SK-N-SH (cell line): ENCODE measurements at regions of chr1 and their contacts with region 1.

Region 1: GRCh38 chr1:164786980-164787833 is 228.2 kb downstream of the PBX1 start:
- DNase-seq: peak; percentile 89
- H3K4me3 ChIP-seq: no peak overlapping the region; a peak in 1 of 4 replicates
- H3K27ac ChIP-seq: no peak overlapping the region
- H3K4me1 ChIP-seq: peaks cover 14 to 19% of the 10 kb centered on the region in 2 experiments; a peak in 3 of 4 replicates
- H3K27me3 ChIP-seq: no peaks in the 10 kb centered on the region
- CTCF ChIP-seq: peak; percentile 96
- EP300 ChIP-seq: no peak
- RAD21 ChIP-seq: peak; percentile 98

Region 2: DNA sequence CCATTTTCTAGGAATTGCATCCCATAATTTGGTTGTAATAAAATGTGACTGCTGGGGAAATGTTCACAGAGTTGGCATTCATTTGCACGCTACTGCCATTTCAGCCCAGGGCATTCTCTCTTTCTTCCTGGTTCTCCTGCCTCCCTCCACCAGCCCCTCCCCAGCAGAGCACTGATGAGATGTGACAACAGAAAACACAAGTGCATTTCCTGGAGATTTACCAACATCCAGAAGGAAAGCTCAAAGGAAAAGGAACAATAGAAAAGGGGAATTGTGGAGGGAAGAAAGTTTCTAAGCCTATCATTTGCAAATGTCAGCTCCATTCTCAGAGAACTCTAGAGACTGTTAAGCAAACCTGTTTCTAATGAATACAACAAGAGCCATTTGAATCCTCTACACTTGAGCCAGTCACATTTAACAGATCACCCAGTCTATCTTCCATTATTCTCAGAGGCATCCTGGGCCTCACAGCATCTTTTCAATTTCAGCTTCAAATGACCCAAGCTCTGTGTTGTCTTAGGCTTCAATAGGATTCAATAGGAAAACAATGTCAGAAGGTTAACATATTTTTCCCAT is 623.8 kb before region 1 on chr1:
- CTCF ChIA-PET with region 1: interaction called, 40 read pairs
- POLR2A ChIA-PET with region 1: no interaction called
- DNase-seq: no peak
- H3K4me3 ChIP-seq: no peak overlapping the region
- H3K27ac ChIP-seq: no peak overlapping the region
- H3K4me1 ChIP-seq: no peaks in the 10 kb centered on the region
- H3K27me3 ChIP-seq: no peaks in the 10 kb centered on the region
- CTCF ChIP-seq: no peak
- EP300 ChIP-seq: no peak
- RAD21 ChIP-seq: no peak

Region 3: DNA sequence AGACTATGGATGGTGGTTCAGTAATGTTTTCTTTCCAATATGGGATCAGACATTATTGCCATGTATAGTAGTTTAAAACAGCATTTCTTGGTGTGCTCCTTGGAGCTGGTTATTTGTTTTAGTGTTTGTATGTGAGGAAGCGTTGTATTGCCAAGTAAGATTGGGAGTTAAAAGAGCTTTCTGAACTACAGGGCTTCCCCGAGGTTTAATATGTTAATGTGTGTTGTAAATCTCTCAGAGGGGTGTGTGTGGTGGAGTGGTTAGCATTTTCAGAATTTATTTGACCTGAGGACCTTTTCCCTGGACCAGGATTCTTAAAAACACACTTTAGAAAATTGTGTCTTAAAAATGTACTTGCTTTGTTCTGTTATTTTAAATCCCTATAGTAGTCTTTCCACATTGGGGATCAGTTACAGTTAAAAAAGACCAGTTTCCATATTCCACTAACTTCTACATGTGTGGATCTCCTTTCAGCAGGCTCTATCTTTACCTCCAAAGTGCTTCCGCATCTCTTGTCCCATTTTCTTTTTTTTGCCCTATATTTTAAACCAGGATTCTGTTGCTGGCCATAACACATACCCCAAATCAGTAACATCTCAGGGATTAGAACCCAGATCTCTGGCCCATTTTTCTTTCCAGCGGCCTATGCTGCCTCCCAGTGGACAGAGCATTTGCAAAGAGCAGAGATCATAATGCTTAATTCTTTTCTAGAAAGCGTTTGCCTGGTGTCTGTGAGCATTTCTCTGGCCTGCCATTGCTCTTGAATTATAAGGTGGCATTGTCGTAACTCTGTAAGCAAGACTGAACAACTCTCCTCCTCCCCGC is 169.6 kb before region 1 on chr1:
- CTCF ChIA-PET with region 1: interaction called, 14 read pairs
- POLR2A ChIA-PET with region 1: no interaction called
- DNase-seq: peak; percentile 31
- H3K4me3 ChIP-seq: no peak overlapping the region
- H3K27ac ChIP-seq: no peak overlapping the region
- H3K4me1 ChIP-seq: peaks cover 0 to 2% of the 10 kb centered on the region in 2 experiments; a peak in 1 of 4 replicates
- H3K27me3 ChIP-seq: no peaks in the 10 kb centered on the region
- CTCF ChIP-seq: peak; percentile 73
- EP300 ChIP-seq: no peak
- RAD21 ChIP-seq: peak; percentile 83

Region 4: GRCh38 chr1:164673584-164674214 is 113.5 kb before region 1 on chr1:
- CTCF ChIA-PET with region 1: interaction called, 11 read pairs
- POLR2A ChIA-PET with region 1: no interaction called
- DNase-seq: peak; percentile 53
- H3K4me3 ChIP-seq: peak overlapping the region in 1 of 2 experiments; percentile 39; a peak in 1 of 4 replicates
- H3K27ac ChIP-seq: no peak overlapping the region
- H3K4me1 ChIP-seq: peaks cover 0 to 14% of the 10 kb centered on the region in 2 experiments; a peak in 2 of 4 replicates
- H3K27me3 ChIP-seq: no peaks in the 10 kb centered on the region
- CTCF ChIP-seq: peak; percentile 70
- EP300 ChIP-seq: no peak
- RAD21 ChIP-seq: peak; percentile 31; the same call in 1 of the 2 replicates

Region 5: DNA sequence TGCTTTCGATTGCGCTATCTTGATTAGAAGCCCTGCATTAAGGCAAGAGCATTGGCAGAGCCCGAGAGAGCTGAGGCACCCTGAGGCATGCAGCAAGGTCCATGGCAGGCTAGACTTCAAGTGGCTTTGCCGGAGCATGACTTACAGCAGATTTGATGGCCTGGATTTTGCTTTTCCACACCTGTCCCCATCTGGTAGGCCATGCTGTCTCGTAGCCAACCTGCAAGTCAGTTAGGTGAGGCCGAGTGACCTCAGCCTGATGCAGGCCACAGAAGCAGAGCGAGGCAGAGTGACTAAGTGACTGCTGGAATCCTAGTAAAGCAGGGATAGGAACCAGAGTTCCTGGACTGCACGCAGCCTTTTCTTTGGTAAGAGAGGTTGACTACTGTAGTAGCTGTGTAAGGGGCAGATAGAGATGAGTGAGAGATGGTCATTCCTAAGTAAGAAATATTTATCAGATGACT is 79.3 kb before region 1 on chr1:
- CTCF ChIA-PET with region 1: interaction called, 36 read pairs
- POLR2A ChIA-PET with region 1: no interaction called
- DNase-seq: no peak
- H3K4me3 ChIP-seq: no peak overlapping the region
- H3K27ac ChIP-seq: peak overlapping the region; percentile 84 to 91
- H3K4me1 ChIP-seq: peaks cover 15 to 45% of the 10 kb centered on the region in 2 experiments
- H3K27me3 ChIP-seq: no peaks in the 10 kb centered on the region
- CTCF ChIP-seq: no peak
- EP300 ChIP-seq: peak in 1 of 2 experiments; percentile 60; a peak in 1 of 4 replicates
- RAD21 ChIP-seq: no peak

Region 6: DNA sequence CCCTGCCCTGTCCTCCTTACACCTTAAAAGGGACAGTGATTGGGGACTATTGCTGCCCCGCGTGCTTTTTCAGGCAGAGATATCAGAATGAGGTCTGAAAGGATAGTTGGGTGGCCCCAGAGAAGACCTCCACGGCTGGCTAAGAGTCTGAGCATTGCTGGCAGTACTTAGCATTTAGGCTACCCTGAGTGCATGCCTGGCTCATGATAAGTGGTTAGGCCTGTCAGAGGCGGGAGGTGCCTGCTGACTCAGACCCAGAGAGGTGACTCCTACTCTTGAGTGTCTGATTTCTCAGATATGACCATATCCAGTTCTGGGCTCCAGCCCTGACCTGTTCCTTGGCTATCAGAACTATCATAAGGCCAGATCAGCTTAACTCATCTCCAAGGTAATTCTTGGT is 14.6 kb before region 1 on chr1:
- CTCF ChIA-PET with region 1: interaction called, 27 read pairs
- POLR2A ChIA-PET with region 1: no interaction called
- DNase-seq: no peak
- H3K4me3 ChIP-seq: no peak overlapping the region
- H3K27ac ChIP-seq: peak overlapping the region; percentile 93 to 96
- H3K4me1 ChIP-seq: peaks cover 44 to 46% of the 10 kb centered on the region in 2 experiments
- H3K27me3 ChIP-seq: no peaks in the 10 kb centered on the region
- CTCF ChIP-seq: no peak
- EP300 ChIP-seq: peak; percentile 35 to 92; a peak in 3 of 4 replicates
- RAD21 ChIP-seq: no peak

Region 7: DNA sequence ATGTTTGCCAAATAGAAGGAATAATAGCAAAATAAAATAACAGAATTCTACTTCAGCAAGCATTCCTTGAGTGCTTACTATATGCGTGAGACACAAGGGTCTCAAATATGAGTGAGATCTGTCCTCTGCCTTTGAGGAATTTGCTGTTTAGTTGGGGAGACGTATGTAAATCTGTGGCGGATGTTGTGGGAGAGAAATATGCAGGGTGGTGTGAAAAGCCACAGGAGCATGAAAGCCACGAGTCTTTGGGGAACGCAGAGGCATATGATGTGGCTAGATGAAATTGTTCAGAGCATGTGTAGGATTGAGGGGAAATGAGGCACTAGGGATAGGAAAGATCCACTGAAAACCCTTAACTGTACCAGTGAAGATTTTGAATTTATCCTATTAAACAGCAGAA is 16.2 kb after region 1 on chr1:
- CTCF ChIA-PET with region 1: interaction called, 11 read pairs
- POLR2A ChIA-PET with region 1: no interaction called
- DNase-seq: no peak
- H3K4me3 ChIP-seq: no peak overlapping the region
- H3K27ac ChIP-seq: no peak overlapping the region
- H3K4me1 ChIP-seq: peaks cover 0 to 6% of the 10 kb centered on the region in 2 experiments; a peak in 2 of 4 replicates
- H3K27me3 ChIP-seq: no peaks in the 10 kb centered on the region
- CTCF ChIP-seq: no peak
- EP300 ChIP-seq: no peak
- RAD21 ChIP-seq: no peak

Region 8: GRCh38 chr1:164922585-164922984 is 135.4 kb after region 1 on chr1:
- CTCF ChIA-PET with region 1: no interaction called
- POLR2A ChIA-PET with region 1: no interaction called
- DNase-seq: no peak
- H3K4me3 ChIP-seq: no peak overlapping the region
- H3K27ac ChIP-seq: no peak overlapping the region
- H3K4me1 ChIP-seq: peaks cover 0 to 6% of the 10 kb centered on the region in 2 experiments; a peak in 1 of 4 replicates
- H3K27me3 ChIP-seq: no peaks in the 10 kb centered on the region
- CTCF ChIP-seq: no peak
- EP300 ChIP-seq: no peak
- RAD21 ChIP-seq: no peak